Mammary epithelial cell (primary cell): ENCODE measurements at regions of chr17 and their contacts with region 1.

Region 1: GRCh38 chr17:57114085-57114673 is 29.1 kb downstream of the AKAP1 start:
- DNase-seq: no peak
- H3K4me3 ChIP-seq: no peak overlapping the region
- H3K27ac ChIP-seq: no peak overlapping the region
- H3K4me1 ChIP-seq: peaks cover 15% of the 10 kb centered on the region
- H3K27me3 ChIP-seq: no peaks in the 10 kb centered on the region
- CTCF ChIP-seq: peak; percentile 76 to 90

Region 2: GRCh38 chr17:57995076-57995956 is 881.1 kb after region 1 on chr17:
- CTCF ChIA-PET with region 1: no interaction called
- dilution Hi-C with region 1: no loop called
- in situ Hi-C with region 1: loop called in 1 of 2 experiments (anchors 25 kb)
- intact Hi-C with region 1: no loop called
- DNase-seq: peak; percentile 61
- H3K4me3 ChIP-seq: no peak overlapping the region
- H3K27ac ChIP-seq: no peak overlapping the region
- H3K4me1 ChIP-seq: no peaks in the 10 kb centered on the region
- H3K27me3 ChIP-seq: no peaks in the 10 kb centered on the region
- CTCF ChIP-seq: peak; percentile 69 to 81